HAP-1 (cell line): ENCODE measurements at regions of chr3 and their contacts with region 1.

Region 1: DNA sequence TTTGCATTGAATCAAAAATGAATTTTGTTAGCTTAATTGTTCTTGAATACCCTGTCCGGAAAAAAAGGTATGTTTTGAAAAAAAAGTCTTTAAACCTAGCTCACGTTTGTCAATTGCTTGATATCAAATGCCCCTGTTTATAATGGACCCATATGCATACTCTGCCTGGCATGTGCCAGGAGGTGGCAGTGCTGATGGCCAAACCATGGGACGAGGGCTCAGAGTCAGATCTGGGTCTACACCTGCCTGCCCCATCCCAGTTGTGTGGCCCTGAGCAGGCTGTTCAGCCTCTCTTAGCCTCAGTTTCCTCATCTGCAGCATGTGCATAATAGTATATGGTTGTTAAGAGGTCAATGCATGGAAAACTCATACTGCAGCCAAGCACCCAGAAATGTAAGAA is 38.8 kb downstream of the PRKCD start:
- DNase-seq: no peak
- H3K4me3 ChIP-seq: no peak overlapping the region
- H3K4me1 ChIP-seq: peaks cover 8% of the 10 kb centered on the region
- H3K27me3 ChIP-seq: no peaks in the 10 kb centered on the region

Region 2: DNA sequence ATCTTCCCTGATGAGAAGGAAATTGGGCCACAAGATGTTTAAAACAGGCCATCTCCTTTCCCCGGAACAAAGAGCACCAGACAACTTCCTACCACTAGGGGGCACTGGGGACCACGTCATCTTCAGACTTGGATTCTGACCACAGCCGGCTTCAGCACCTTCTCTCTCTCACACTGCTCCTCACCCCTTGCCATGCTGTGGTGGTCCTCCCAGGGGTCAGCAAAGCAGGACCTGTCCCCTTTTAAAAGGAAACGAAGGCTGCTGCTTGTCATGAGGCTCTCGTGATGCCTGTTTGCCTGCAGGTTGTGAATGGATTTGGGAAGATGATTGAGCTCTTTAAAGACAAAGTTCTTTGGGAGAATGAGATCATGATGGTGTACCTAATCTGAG is 85.8 kb before region 1 on chr3:
- in situ Hi-C with region 1: loop called (anchors 5 kb)
- DNase-seq: peak; percentile 69 to 88
- H3K4me3 ChIP-seq: no peak overlapping the region
- H3K4me1 ChIP-seq: no peaks in the 10 kb centered on the region
- H3K27me3 ChIP-seq: no peaks in the 10 kb centered on the region

Region 3: GRCh38 chr3:53792866-53793265 is 593.0 kb after region 1 on chr3:
- in situ Hi-C with region 1: no loop called
- DNase-seq: no peak
- H3K4me3 ChIP-seq: no peak overlapping the region
- H3K4me1 ChIP-seq: no peaks in the 10 kb centered on the region
- H3K27me3 ChIP-seq: no peaks in the 10 kb centered on the region